ENCODE measurements at regions of chr10 and their contacts with region 1.

Region 1: DNA sequence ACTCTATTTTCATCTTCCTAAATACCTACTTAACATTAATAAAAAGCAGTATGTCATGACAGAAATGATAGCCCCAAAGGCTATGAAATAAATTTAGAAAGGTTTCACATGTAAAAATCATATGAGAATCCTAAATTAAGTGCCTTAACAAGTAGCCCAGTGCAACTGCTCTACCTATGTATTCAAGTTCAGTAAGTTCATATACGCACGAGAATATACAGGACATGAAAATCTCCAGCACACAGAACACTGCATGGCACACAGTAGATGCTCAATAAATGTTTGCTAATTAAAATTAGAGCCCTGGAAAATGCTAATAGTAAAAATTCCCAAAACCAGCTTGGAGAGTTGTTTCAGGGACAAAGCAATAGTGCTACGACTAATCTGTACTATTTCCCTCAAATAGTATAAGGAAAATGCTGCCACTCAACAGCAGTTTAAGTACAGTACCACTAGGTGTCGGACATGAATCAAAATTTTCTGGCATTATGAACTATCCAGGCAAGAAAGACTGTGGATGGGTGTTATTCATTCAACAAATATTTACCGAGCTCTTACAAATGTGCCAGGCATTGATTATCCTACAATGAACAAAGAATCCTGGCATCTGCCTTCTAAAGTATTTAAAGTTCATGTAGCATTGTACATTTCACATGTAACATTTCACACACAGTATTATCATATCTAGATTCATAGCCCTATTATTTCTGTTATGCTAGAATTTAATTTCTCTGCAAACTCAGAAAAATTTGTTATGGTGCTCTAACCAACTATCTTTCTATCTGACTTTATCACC is 80.9 kb downstream of the ARHGAP21 start:
- DNase-seq: no peak
- ATAC-seq: peak; percentile 86 to 95 (median 90)
- H3K4me3 ChIP-seq: no peak overlapping the region
- H3K27ac ChIP-seq: no peak overlapping the region
- H3K4me1 ChIP-seq: peaks cover 19% of the 10 kb centered on the region
- H3K27me3 ChIP-seq: no peaks in the 10 kb centered on the region
- CTCF ChIP-seq: peak; percentile 83

Region 2: GRCh38 chr10:24589265-24589664 is 53.6 kb before region 1 on chr10:
- intact Hi-C with region 1: no loop called
- DNase-seq: no peak
- ATAC-seq: no peak
- H3K4me3 ChIP-seq: no peak overlapping the region
- H3K27ac ChIP-seq: no peak overlapping the region
- H3K4me1 ChIP-seq: peaks cover 4% of the 10 kb centered on the region
- H3K27me3 ChIP-seq: no peaks in the 10 kb centered on the region
- CTCF ChIP-seq: no peak

Region 3: DNA sequence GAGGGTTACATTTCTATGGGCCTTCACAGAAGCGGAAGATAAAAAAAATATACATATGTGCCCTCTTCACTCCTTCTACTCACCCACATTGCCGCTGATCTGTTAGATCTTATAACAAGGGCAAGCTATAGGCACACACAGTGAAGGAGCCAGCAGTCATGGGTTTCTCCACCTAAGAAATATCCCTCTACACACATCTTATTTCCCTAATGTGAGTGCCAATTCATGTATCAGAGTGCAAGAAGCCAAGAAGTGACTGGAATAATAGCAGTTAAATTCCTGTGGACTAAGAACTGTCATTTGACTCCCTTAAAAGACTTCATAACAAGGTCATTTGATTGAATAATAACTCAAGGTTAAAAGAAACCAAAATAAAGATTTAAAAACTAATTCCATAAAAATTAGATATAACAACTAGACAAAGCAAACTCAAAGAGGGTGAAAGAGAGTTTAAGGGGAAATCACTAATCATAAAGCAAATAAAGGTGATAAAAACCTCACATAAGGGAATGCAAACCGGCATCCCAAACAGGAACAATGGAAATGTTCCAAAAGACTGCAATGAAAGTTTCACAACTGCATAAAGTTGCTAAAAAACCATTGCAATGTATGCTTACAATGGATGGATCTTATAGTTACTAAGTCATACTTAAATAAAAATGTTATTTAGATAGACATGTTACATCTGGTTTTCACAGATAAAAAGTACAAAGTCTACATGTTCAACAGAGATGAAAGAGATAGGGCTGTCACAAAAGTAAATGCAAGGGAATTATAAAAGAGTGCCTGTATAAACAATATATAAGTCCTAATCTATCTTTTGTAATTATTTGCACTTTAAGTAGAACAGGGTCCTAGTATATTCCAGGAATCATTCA is 38.1 kb after region 1 on chr10:
- intact Hi-C with region 1: loop called in 1 of 2 experiments (anchors 5 kb)
- DNase-seq: no peak
- ATAC-seq: peak; percentile 53 to 76 (median 70)
- H3K4me3 ChIP-seq: peak overlapping the region; percentile 13
- H3K27ac ChIP-seq: peak overlapping the region; percentile 38
- H3K4me1 ChIP-seq: peaks cover 27% of the 10 kb centered on the region
- H3K27me3 ChIP-seq: no peaks in the 10 kb centered on the region
- CTCF ChIP-seq: no peak

Region 4: GRCh38 chr10:24989867-24990266 is 347.0 kb after region 1 on chr10:
- intact Hi-C with region 1: loop called in 1 of 2 experiments (anchors 5 kb)
- DNase-seq: no peak
- ATAC-seq: no peak
- H3K4me3 ChIP-seq: no peak overlapping the region
- H3K27ac ChIP-seq: no peak overlapping the region
- H3K4me1 ChIP-seq: no peaks in the 10 kb centered on the region
- H3K27me3 ChIP-seq: no peaks in the 10 kb centered on the region
- CTCF ChIP-seq: peak; percentile 16

Region 5: DNA sequence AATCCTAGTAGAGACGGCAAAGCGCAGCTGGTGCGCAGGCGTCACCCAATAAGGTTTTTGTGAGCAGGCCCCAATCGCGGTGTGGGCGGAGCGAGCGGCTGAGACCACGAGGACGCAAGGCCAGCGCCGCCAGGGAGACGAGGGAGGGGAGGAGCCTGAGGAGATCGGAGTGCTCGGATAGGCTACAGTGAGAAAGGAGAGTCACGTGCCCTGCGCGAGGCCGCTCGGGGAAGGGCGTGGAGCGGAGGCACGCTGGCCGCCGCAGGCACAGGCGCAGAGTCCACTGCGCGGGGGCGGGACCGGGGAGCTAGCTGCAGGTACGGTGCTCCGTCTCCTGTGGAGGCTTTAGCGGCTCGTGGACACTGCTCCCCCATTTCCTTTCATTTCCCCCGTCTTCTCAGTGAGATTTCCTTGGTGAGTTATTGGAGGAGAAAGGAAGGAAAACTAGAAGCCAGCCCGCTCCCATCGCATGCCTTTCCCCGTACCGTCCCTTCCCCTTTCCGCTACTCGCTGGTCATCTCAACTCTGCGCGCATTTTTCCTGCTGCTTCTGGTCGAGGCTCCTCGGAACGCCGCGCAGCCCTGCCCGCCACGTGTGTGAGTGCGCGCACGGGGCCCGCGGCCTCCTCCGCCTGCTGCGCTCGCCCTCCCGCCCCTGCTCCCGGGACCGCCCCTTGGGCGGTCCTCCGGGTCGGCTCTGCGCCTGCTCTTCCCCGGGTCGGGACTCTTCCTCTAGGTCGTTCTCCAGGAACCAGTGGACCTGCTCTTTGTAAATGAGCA is 373.7 kb after region 1 on chr10 and contains the start of gene THNSL1:
- intact Hi-C with region 1: loop called (anchors 10 kb)
- DNase-seq: peak; percentile 99
- ATAC-seq: peak; percentile 99 to 100 (median 99)
- H3K4me3 ChIP-seq: peak within 1 kb of the TSS; percentile 86
- H3K27ac ChIP-seq: peak within 1 kb of the TSS; percentile 95
- H3K4me1 ChIP-seq: peaks cover 11% of the 10 kb centered on the region
- H3K27me3 ChIP-seq: no peaks in the 10 kb centered on the region
- CTCF ChIP-seq: no peak
- total RNA-seq, gene THNSL1: 2.0 to 8.7 (median 5.7) TPM

Region 6: DNA sequence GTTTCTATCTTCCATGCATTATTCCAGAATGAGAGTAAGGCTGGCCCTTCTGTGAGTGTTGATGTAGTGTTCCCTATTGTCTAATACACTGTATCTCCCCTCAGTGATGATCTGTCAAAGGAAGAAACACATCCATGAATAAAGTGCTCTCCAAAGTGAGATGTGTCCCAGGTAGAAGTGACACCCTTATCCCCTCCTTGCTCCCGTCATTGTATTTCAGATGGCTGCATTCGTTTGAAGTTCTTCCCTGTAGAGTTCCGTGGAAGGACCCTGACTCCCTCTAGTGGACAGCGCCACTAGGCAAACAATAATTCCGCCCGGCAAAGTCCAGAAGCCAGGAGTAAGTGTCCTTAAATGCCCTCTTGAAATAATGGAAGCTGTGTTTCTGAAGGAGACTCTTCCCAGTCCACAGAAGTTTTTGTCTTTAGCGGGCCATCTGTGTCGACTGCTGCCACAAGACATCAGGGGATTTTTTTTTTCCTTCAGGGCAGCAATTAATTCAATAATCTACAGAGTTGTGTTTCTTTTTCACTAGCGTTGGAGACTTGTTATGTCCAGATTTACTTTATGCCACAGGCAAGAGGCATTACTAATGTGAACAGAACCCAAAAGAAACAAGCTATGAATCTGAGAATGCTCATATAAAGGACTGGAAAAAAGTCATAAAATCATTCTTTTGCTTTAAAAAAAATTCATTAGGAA is 438.2 kb after region 1 on chr10:
- intact Hi-C with region 1: loop called (anchors 2 to 5 kb)
- DNase-seq: peak; percentile 66 to 82
- ATAC-seq: peak; percentile 90 to 99 (median 96)
- H3K4me3 ChIP-seq: no peak overlapping the region
- H3K27ac ChIP-seq: no peak overlapping the region
- H3K4me1 ChIP-seq: no peaks in the 10 kb centered on the region
- H3K27me3 ChIP-seq: no peaks in the 10 kb centered on the region
- CTCF ChIP-seq: peak; percentile 87